MCF 10A (cell line): ENCODE measurements at regions of chr11 and their contacts with region 1.

Region 1: GRCh38 chr11:72141066-72141465 is 5.5 kb downstream of the FOLR3 start:
- DNase-seq: peak; percentile 61
- H3K4me3 Mint-ChIP-seq: peak overlapping the region; percentile 29
- H3K27ac Mint-ChIP-seq: peak overlapping the region; percentile 87
- H3K4me1 Mint-ChIP-seq: peaks cover 30% of the 10 kb centered on the region
- H3K27me3 Mint-ChIP-seq: no peaks in the 10 kb centered on the region
- CTCF ChIP-seq: no peak

Region 2: GRCh38 chr11:72015511-72016171 is 125.4 kb before region 1 on chr11:
- CTCF ChIA-PET with region 1: interaction called, 10 read pairs
- POLR2A ChIA-PET with region 1: interaction called, 3 read pairs
- intact Hi-C with region 1: no loop called
- DNase-seq: no peak
- H3K4me3 Mint-ChIP-seq: no peak overlapping the region
- H3K27ac Mint-ChIP-seq: no peak overlapping the region
- H3K4me1 Mint-ChIP-seq: peaks cover 34% of the 10 kb centered on the region
- H3K27me3 Mint-ChIP-seq: no peaks in the 10 kb centered on the region
- CTCF ChIP-seq: peak; percentile 20

Region 3: GRCh38 chr11:72030472-72031045 is 110.5 kb before region 1 on chr11:
- CTCF ChIA-PET with region 1: interaction called, 20 read pairs
- POLR2A ChIA-PET with region 1: interaction called, 19 read pairs
- intact Hi-C with region 1: loop called (anchors 1 kb)
- DNase-seq: no peak
- H3K4me3 Mint-ChIP-seq: no peak overlapping the region
- H3K27ac Mint-ChIP-seq: peak overlapping the region; percentile 27
- H3K4me1 Mint-ChIP-seq: peaks cover under 1% of the 10 kb centered on the region
- H3K27me3 Mint-ChIP-seq: no peaks in the 10 kb centered on the region
- CTCF ChIP-seq: no peak

Region 4: GRCh38 chr11:72080256-72080974 is 60.7 kb before region 1 on chr11 and contains the starts of genes LRRC51 and NUMA1:
- CTCF ChIA-PET with region 1: interaction called, 17 read pairs
- POLR2A ChIA-PET with region 1: interaction called, 11 read pairs
- intact Hi-C with region 1: no loop called
- DNase-seq: peak; percentile 100
- H3K4me3 Mint-ChIP-seq: peak within 1 kb of the TSS; percentile 99
- H3K27ac Mint-ChIP-seq: peak within 1 kb of the TSS; percentile 99
- H3K4me1 Mint-ChIP-seq: peaks cover 48% of the 10 kb centered on the region
- H3K27me3 Mint-ChIP-seq: no peaks in the 10 kb centered on the region
- CTCF ChIP-seq: no peak
- total RNA-seq, gene LRRC51: 9.3 and 9.5 TPM in 2 replicates
- total RNA-seq, gene NUMA1: 109 and 113 TPM in 2 replicates

Region 5: GRCh38 chr11:72091005-72091691 is 49.9 kb before region 1 on chr11:
- CTCF ChIA-PET with region 1: interaction called, 18 read pairs
- POLR2A ChIA-PET with region 1: interaction called, 7 read pairs
- intact Hi-C with region 1: no loop called
- DNase-seq: peak; percentile 69
- H3K4me3 Mint-ChIP-seq: no peak overlapping the region
- H3K27ac Mint-ChIP-seq: peak overlapping the region; percentile 70
- H3K4me1 Mint-ChIP-seq: no peaks in the 10 kb centered on the region
- H3K27me3 Mint-ChIP-seq: no peaks in the 10 kb centered on the region
- CTCF ChIP-seq: peak; percentile 77

Region 6: GRCh38 chr11:72112321-72113219 is 28.5 kb before region 1 on chr11 and contains the start of gene ANAPC15:
- CTCF ChIA-PET with region 1: interaction called, 31 read pairs
- POLR2A ChIA-PET with region 1: interaction called, 83 read pairs
- intact Hi-C with region 1: loop called (anchors 1 kb)
- DNase-seq: peak; percentile 100
- H3K4me3 Mint-ChIP-seq: peak within 1 kb of the TSS; percentile 98
- H3K27ac Mint-ChIP-seq: peak within 1 kb of the TSS; percentile 100
- H3K4me1 Mint-ChIP-seq: peaks cover 20% of the 10 kb centered on the region
- H3K27me3 Mint-ChIP-seq: no peaks in the 10 kb centered on the region
- CTCF ChIP-seq: no peak
- total RNA-seq, gene ANAPC15: 52.2 and 63.6 TPM in 2 replicates

Region 7: GRCh38 chr11:72174299-72175070 is 33.4 kb after region 1 on chr11:
- CTCF ChIA-PET with region 1: interaction called, 111 read pairs
- POLR2A ChIA-PET with region 1: interaction called, 100 read pairs
- intact Hi-C with region 1: no loop called
- DNase-seq: peak; percentile 73
- H3K4me3 Mint-ChIP-seq: no peak overlapping the region
- H3K27ac Mint-ChIP-seq: no peak overlapping the region
- H3K4me1 Mint-ChIP-seq: peaks cover 11% of the 10 kb centered on the region
- H3K27me3 Mint-ChIP-seq: no peaks in the 10 kb centered on the region
- CTCF ChIP-seq: no peak